ENCODE measurements at regions of chr12 and their contacts with region 1.

Region 1: GRCh38 chr12:121793838-121794533 is 498 bp upstream of the RHOF start:
- DNase-seq: peak; percentile 88 to 96
- ATAC-seq: peak; percentile 45 to 74
- H3K4me3 ChIP-seq: peak overlapping the region; percentile 96
- H3K27ac ChIP-seq: peak overlapping the region; percentile 100
- H3K4me1 ChIP-seq: peaks cover 75% of the 10 kb centered on the region
- CTCF ChIP-seq: peak; percentile 100
- EP300 ChIP-seq: no peak
- POLR2A ChIP-seq: no peak; the same call in 1 of the 2 replicates
- RAD21 ChIP-seq: peak; percentile 94 to 98

Region 2: GRCh38 chr12:121697098-121697698 is 96.8 kb before region 1 on chr12:
- CTCF ChIA-PET with region 1: interaction called, 322 read pairs
- POLR2A ChIA-PET with region 1: no interaction called
- DNase-seq: peak; percentile 54 to 70
- ATAC-seq: peak in 1 of 2 experiments; percentile 55; a peak in 3 of 6 replicates
- H3K4me3 ChIP-seq: no peak overlapping the region
- H3K27ac ChIP-seq: peak overlapping the region; percentile 4 to 27; a peak in 3 of 6 replicates
- H3K4me1 ChIP-seq: peaks cover 13% of the 10 kb centered on the region; the same call in 2 of the 3 replicates
- CTCF ChIP-seq: peak; percentile 83
- EP300 ChIP-seq: no peak
- POLR2A ChIP-seq: no peak
- RAD21 ChIP-seq: peak; percentile 88 to 90

Region 3: DNA sequence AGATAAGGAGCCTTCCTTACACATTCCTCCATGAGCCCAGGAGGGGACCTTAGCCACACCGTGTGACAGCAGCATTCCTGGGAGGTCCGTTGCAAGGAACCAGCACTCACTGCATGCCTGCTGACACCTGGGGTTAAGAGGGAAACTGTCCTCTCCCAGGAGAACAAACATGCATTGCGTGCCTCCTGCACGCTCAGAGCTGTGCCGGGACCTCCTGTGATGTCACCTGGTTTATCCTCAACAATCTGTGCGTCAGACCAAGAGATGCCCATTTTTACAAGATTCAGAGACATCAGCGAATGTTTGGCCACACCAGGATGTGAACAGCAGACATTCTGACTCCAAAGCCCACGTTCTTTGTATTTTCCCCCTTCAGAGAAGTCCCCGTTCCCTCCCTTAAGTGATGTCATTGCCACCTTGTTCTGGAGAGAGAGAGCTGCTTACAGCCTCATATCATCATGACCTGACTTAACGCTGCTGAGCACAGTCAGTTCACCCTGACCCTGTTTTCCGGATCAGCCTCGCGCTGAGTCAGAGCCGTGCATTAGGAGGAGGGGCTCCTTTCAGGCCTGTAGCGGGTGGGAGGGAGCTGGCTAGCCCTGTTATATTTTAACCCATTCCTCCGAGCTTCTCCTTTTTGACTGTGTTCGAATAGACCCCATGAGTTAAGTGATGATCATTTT is 45.3 kb before region 1 on chr12:
- CTCF ChIA-PET with region 1: interaction called, 16 read pairs
- POLR2A ChIA-PET with region 1: interaction called, 4 read pairs
- DNase-seq: peak; percentile 85 to 96
- ATAC-seq: peak; percentile 94 to 95
- H3K4me3 ChIP-seq: peak overlapping the region; percentile 13; the same call in 2 of the 3 replicates
- H3K27ac ChIP-seq: peak overlapping the region; percentile 87 to 88
- H3K4me1 ChIP-seq: peaks cover 23% of the 10 kb centered on the region
- CTCF ChIP-seq: no peak
- EP300 ChIP-seq: peak; percentile 45 to 86; a peak in 3 of 5 replicates
- POLR2A ChIP-seq: no peak
- RAD21 ChIP-seq: no peak

Region 4: GRCh38 chr12:121839106-121839992 is 45.4 kb after region 1 on chr12:
- CTCF ChIA-PET with region 1: interaction called, 2,657 read pairs
- POLR2A ChIA-PET with region 1: interaction called, 4 read pairs
- DNase-seq: peak; percentile 96 to 98
- ATAC-seq: peak; percentile 93 to 94
- H3K4me3 ChIP-seq: peak overlapping the region; percentile 54
- H3K27ac ChIP-seq: peak overlapping the region; percentile 76 to 88
- H3K4me1 ChIP-seq: no peaks in the 10 kb centered on the region
- CTCF ChIP-seq: no peak
- EP300 ChIP-seq: no peak
- POLR2A ChIP-seq: peak; percentile 55
- RAD21 ChIP-seq: no peak

Region 5: GRCh38 chr12:121883315-121883660 is 89.3 kb after region 1 on chr12:
- CTCF ChIA-PET with region 1: interaction called, 195 read pairs
- POLR2A ChIA-PET with region 1: interaction called, 20 read pairs
- DNase-seq: no peak
- ATAC-seq: peak; percentile 28 to 61; a peak in 3 of 6 replicates
- H3K4me3 ChIP-seq: no peak overlapping the region
- H3K27ac ChIP-seq: no peak overlapping the region
- H3K4me1 ChIP-seq: 0 out of 3 replicates have a peak, but pooled peaks cover 3% of the 10 kb centered on the region
- CTCF ChIP-seq: no peak
- EP300 ChIP-seq: no peak
- POLR2A ChIP-seq: no peak
- RAD21 ChIP-seq: no peak